Activated CD4-positive, alpha-beta memory T cell treated with anti-CD3 and anti-CD28 coated beads for 36 hours (primary cell): ENCODE measurements at regions of chr4 and their contacts with region 1.

Region 1: GRCh38 chr4:22802876-22803275 is 110.1 kb downstream of the GBA3 start:
- DNase-seq: no peak
- H3K4me3 Mint-ChIP-seq: no peak overlapping the region
- H3K27ac Mint-ChIP-seq: no peak overlapping the region
- H3K4me1 Mint-ChIP-seq: no peaks in the 10 kb centered on the region
- H3K27me3 Mint-ChIP-seq: no peaks in the 10 kb centered on the region

Region 2: DNA sequence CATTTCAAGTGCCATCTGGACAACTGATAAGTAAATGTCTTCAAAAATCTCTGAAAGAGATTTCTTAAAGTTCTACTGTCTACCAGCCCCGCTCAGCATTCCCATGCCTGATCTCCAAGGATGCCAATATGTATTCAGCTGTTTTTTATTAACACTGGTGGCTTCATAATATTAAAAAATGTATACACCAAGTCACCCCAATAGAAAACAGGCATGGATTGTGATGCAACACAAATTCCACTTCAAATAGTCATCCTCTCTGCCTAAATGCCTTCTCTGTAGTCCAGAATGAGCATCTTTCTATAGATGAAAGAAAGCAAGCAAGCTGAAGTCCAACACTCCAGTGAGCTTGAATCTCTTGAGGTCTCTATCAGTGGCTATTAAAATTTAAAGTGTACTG is 1239.2 kb after region 1 on chr4:
- CTCF ChIA-PET with region 1: no interaction called
- POLR2A ChIA-PET with region 1: no interaction called
- intact Hi-C with region 1: loop called (anchors 5 kb)
- DNase-seq: no peak
- H3K4me3 Mint-ChIP-seq: no peak overlapping the region
- H3K27ac Mint-ChIP-seq: no peak overlapping the region
- H3K4me1 Mint-ChIP-seq: no peaks in the 10 kb centered on the region
- H3K27me3 Mint-ChIP-seq: no peaks in the 10 kb centered on the region